Endothelial cell of umbilical vein (primary cell): ENCODE measurements at regions of chr7 and their contacts with region 1.

Region 1: DNA sequence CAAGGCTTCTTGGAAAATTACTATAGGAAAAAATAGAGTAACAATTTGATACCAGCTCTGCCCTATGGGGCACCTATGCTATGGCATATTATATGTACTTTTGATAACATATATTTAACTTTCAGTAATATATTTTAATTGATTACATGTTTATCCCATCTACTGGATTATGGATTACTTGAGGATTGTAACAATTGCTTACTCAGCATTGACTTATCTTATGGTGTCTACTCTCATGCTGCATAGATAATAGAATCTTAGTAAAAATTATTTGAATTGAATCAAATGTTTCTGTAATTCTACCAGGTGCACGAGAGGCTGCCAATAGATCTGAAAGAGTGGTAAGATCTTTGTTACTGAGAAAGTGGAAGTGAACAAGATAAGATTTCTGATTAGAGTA is 57.8 kb upstream of the CALCR start:
- DNase-seq: no peak
- H3K4me3 ChIP-seq: no peak overlapping the region
- H3K27ac ChIP-seq: no peak overlapping the region
- H3K4me1 ChIP-seq: no peaks in the 10 kb centered on the region
- H3K27me3 ChIP-seq: peaks cover 0 to 1% of the 10 kb centered on the region in 2 experiments
- CTCF ChIP-seq: no peak
- POLR2A ChIP-seq: no peak

Region 2: DNA sequence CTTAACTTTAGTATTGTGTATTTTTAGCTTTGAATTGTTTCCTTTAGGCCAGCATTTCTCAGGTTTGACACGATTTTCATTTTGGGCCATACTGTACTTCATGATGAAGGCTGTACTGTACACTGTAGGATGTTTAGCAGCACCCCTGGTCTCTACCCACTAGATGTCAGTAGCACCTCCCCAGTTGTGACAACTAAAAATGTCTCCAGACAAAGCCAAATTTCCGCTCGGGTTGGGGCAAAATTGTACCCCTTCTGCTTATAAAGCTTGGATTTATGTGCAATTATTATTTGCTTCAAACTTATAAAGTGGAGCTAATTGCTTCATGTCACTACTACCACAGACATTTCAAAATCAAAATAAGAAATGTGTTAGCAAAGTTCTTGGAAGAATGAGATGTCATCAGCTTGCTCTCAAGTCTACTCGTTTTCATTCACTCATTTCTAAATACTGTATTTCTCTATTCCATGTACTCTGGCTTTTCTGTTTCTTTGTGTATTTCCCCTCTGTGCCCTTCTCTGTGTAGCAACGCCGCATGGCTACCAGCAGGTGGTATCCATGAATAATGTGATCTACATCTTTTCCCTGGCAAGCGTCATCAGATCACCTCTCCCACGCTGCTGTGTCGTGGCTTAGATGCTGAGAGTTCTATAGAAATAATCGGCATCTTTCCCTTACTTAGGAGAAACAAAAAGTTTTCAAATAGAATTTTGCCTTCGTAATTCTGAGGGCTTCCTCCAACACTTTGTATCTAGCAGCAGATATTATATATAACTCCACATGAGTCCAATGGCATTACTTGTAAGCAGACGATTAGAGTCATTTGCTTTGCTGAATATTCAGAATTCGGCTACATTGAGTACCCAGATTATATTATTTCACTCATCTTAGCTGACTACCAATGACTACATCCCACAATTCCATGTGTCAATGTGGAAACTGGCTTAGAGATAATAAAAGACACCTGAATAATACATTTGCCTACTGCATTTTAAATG is 10.0 kb before region 1 on chr7:
- CTCF ChIA-PET with region 1: interaction called, 18 read pairs
- POLR2A ChIA-PET with region 1: no interaction called
- dilution Hi-C with region 1: no loop called
- intact Hi-C with region 1: no loop called
- DNase-seq: no peak
- H3K4me3 ChIP-seq: no peak overlapping the region
- H3K27ac ChIP-seq: no peak overlapping the region
- H3K4me1 ChIP-seq: no peaks in the 10 kb centered on the region
- H3K27me3 ChIP-seq: no peaks in the 10 kb centered on the region
- CTCF ChIP-seq: peak in 1 of 2 donors; percentile 24
- POLR2A ChIP-seq: no peak